ENCODE measurements at regions of chr7 and their contacts with region 1.

Region 1: DNA sequence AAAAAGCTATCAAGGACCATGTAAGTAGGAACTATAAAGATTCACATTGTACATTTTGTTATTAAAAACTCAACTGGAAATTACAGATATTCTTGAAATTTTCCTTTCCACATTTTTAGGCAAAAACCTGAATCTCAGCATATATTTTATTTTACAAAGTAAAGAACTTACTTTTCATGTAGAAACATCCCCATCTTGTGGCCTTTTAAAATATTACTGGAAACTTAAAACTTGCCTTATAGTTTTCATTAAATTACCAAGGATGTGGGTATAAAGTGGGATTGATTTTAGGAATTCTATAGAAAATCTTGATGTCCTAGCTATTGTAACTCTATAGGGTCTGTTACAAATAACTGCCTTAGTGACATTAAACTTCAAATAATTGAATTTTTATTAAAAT is 10.6 kb downstream of the DBF4 start:
- DNase-seq: no peak
- CTCF ChIP-seq: no peak

Region 2: GRCh38 chr7:87506246-87507180 is 380.4 kb before region 1 on chr7:
- in situ Hi-C with region 1: loop called (anchors 10 kb)
- DNase-seq: no peak
- CTCF ChIP-seq: no peak

Region 3: DNA sequence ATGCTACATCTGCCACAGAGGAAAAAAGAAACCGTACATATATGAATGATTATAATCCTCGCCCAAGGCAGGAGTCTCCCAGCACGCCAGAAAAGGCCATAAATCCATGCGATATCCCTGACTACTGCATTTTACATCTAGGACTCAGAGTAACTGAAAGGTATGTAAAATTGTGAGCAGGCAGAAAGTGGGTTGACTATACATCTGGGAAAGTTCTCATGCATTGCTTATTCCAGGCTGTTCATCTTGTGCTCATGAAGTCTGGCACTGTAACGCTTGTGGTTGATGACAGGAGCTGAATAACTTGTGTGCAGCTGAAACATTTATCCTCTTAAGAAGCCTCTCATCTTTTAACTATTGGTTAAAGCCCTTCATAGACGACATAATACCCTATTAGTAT is 613.3 kb after region 1 on chr7:
- in situ Hi-C with region 1: no loop called
- DNase-seq: no peak
- CTCF ChIP-seq: no peak